Natural killer cell (primary cell): ENCODE measurements at regions of chr11 and their contacts with region 1.

Region 1: GRCh38 chr11:3980961-3981633 is 113.5 kb upstream of the RRM1 start:
- DNase-seq: no peak
- ATAC-seq: no peak
- H3K4me3 ChIP-seq: no peak overlapping the region
- H3K4me3 Mint-ChIP-seq: no peak overlapping the region
- H3K27ac ChIP-seq: no peak overlapping the region
- H3K27ac Mint-ChIP-seq: peak overlapping the region in 1 of 2 donors; percentile 14
- H3K4me1 ChIP-seq: peaks cover 4% of the 10 kb centered on the region
- H3K4me1 Mint-ChIP-seq: peaks cover 74 to 82% of the 10 kb centered on the region in 2 donors
- H3K27me3 ChIP-seq: no peaks in the 10 kb centered on the region
- H3K27me3 Mint-ChIP-seq: no peaks in the 10 kb centered on the region
- CTCF ChIP-seq: no peak

Region 2: DNA sequence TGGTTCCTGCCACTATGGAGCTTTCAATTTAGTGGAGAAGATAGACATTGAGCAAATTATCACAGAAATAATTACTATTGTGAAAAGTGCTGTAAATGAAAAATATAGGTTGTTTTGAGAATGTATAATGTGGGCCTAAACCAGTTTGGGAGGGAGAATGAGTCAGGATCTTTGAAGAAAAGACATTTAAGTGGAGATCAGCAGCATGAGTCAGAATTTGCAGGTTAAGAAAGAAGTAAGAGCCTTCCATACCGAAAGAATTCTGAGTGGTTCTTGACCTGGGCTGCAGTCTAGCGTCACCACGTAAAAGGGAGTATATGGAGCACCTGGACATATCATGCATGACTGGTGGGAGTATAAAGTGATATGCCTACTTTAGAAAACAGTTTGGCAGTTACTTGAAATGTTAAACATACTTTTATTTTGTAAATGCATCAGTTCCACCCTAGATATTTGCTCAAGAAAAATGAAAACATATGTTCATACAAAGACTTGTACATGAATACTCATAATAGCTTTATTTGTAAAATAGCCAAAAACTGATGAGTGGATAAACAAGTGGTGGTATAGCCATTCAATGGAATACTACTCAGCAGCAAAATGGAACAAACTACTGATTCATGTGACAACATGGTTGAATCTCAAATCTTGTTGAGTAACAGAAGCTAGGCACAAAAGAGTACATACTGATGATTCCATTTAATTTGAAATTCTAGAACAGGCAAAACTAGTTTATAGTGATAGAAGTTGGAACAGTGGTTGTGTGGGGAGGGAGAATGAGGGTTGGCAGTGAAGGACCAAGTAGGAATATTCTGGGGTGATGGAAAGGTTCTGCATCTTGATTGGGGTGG is 26.4 kb before region 1 on chr11:
- intact Hi-C with region 1: loop called (anchors 2 kb)
- DNase-seq: no peak
- ATAC-seq: no peak
- H3K4me3 ChIP-seq: no peak overlapping the region
- H3K4me3 Mint-ChIP-seq: peak overlapping the region; percentile 26
- H3K27ac ChIP-seq: no peak overlapping the region
- H3K27ac Mint-ChIP-seq: peak overlapping the region; percentile 38 to 70
- H3K4me1 ChIP-seq: peaks cover 46% of the 10 kb centered on the region
- H3K4me1 Mint-ChIP-seq: peaks cover 77 to 81% of the 10 kb centered on the region in 2 donors
- H3K27me3 ChIP-seq: no peaks in the 10 kb centered on the region
- H3K27me3 Mint-ChIP-seq: no peaks in the 10 kb centered on the region
- CTCF ChIP-seq: no peak

Region 3: DNA sequence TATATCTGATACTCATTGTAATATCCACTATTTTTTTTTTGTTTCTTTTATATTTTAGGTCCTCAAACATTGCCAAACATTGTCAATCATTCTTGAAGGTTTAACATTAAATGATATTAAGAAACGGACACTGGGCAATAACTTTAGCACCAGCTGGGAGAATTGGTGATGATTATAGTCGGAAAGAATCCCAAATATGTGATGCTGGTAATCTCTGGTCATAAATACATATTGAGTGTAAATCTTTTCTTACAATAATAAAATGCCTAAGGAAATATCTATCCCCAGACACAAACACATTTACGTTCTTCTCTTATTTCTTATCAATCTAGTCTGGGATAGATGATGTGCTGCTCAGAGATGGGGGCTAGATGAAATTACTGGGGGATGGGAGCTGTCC is 691.4 kb after region 1 on chr11:
- intact Hi-C with region 1: no loop called
- DNase-seq: no peak
- ATAC-seq: no peak
- H3K4me3 ChIP-seq: no peak overlapping the region
- H3K4me3 Mint-ChIP-seq: no peak overlapping the region
- H3K27ac ChIP-seq: no peak overlapping the region
- H3K27ac Mint-ChIP-seq: no peak overlapping the region
- H3K4me1 ChIP-seq: no peaks in the 10 kb centered on the region
- H3K4me1 Mint-ChIP-seq: no peaks in the 10 kb centered on the region
- H3K27me3 ChIP-seq: no peaks in the 10 kb centered on the region
- H3K27me3 Mint-ChIP-seq: peaks cover 13 to 38% of the 10 kb centered on the region in 2 donors
- CTCF ChIP-seq: no peak

Region 4: DNA sequence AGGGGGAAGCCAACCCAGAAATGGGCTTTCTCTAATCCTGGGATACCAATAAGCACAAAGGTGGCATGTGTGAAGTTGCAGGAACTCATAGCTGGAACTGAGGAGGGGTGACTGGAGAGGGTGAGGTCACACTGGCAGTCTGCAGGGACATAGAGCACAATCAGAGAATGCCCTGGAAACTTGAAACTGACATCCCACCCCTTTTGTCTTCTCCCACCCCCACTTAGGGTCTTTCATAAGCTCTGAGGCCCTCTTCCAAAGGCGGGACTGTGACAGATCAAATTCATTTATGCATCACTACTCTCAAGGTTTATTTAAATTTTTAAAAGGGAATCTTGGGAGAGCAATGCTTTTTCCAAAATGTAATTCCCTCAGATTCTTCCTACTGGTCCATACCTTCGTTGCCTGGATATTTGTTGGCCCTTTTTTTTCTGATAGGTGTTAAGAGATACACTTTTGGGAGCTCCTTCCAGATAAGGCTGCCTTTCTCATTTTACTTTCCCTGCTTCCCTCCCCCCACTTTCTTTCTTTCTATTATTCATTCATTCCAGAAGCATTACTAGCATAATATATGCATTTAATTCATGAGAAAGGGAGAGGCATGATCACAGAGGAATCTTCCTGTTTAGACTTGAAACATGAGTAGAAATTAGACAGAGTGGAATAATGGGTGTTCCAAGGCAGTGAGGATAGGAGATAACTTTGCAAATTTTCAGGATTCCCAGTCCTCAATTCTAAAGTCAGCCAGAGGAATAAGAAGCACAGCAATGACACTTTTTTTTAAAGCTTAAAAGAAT is 701.7 kb after region 1 on chr11:
- intact Hi-C with region 1: no loop called
- DNase-seq: no peak
- ATAC-seq: no peak
- H3K4me3 ChIP-seq: no peak overlapping the region
- H3K4me3 Mint-ChIP-seq: no peak overlapping the region
- H3K27ac ChIP-seq: no peak overlapping the region
- H3K27ac Mint-ChIP-seq: no peak overlapping the region
- H3K4me1 ChIP-seq: no peaks in the 10 kb centered on the region
- H3K4me1 Mint-ChIP-seq: no peaks in the 10 kb centered on the region
- H3K27me3 ChIP-seq: no peaks in the 10 kb centered on the region
- H3K27me3 Mint-ChIP-seq: no peaks in the 10 kb centered on the region
- CTCF ChIP-seq: no peak